ENCODE measurements at regions of chr2 and their contacts with region 1.

Region 1: DNA sequence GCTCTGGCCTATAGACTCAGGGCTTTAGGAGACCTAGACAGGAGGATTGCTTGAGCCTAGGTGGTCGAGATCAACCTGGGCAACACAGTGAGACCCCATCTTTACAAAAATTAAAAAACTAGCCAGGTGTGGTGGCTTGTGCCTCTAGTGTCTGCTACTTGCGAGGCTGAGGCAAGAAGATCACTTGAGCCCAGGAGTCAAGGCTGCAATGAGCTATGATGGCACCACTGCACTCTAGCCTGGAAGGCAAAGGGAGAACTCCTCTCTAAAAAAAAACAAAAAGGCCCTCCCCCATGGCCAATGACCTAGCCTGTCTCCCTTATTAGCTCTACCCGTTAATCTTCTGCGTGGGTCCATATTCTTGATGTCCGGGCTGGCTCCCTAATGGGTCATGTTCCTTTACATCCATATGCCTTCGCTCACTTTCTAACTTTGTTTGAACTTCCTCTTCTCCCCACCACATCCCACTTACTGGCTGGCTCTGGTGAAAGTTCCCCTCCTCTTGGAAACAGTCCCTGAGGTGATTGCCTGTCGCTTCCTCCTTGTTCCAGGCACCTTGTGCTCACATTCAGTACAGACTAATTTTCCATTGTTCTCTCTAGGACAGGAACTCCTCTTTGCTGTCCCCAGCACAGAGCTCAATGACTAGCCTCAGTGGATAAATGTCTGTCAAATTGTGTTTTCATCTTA is 103.0 kb downstream of the AFF3 start:
- DNase-seq: no peak
- CTCF ChIP-seq: no peak

Region 2: DNA sequence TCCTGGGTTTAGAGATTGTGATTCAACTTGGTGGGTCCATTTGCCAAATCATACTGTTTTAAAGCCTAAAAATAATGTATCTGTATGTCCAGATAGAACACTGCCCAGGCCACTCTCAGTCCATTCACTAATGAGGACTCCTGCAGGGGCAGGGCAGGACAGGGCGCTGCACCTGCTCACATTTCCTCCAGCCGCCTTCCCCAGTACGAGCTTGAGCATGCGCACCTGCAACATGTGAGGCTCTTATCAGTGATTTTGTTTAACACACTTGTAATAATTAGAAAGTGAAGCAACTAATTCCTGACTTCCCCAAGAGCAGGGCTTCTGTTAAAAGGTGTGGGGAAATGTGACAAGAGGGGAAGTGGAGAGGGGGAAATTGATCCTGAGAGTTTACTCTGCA is 13.2 kb after region 1 on chr2:
- CTCF ChIA-PET with region 1: interaction called, 24 read pairs
- POLR2A ChIA-PET with region 1: no interaction called
- DNase-seq: no peak
- CTCF ChIP-seq: no peak

Region 3: DNA sequence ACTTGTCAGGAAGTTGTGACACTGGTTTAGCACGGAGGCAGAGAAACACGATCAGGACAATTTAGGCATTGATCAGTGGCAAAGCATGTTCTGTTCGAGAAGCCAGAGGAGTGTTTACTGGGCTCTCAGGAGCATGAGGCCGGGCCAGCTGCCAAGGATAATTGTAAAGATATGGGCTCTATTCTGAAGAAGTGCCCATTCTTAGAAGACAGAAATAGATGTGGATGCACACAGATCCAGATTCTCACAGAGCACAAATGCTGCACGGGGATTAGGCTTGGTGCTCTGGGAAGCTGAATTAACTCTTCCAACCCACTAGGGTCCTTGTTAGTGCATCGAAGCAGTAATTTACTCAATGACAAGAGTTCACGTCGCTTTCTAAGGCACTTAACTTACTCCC is 86.8 kb after region 1 on chr2:
- CTCF ChIA-PET with region 1: no interaction called
- POLR2A ChIA-PET with region 1: no interaction called
- DNase-seq: no peak
- CTCF ChIP-seq: no peak